ENCODE measurements at regions of chr2 and their contacts with region 1.

Region 1: GRCh38 chr2:190781604-190782198 is 98.9 kb upstream of the GLS start:
- H3K4me3 Mint-ChIP-seq: no peak overlapping the region
- H3K27ac Mint-ChIP-seq: no peak overlapping the region
- H3K4me1 Mint-ChIP-seq: no peaks in the 10 kb centered on the region
- H3K27me3 Mint-ChIP-seq: no peaks in the 10 kb centered on the region

Region 2: GRCh38 chr2:190804182-190804795 is 22.6 kb after region 1 on chr2:
- intact Hi-C with region 1: loop called (anchors 1 kb)
- H3K4me3 Mint-ChIP-seq: no peak overlapping the region
- H3K27ac Mint-ChIP-seq: no peak overlapping the region
- H3K4me1 Mint-ChIP-seq: peaks cover 6% of the 10 kb centered on the region
- H3K27me3 Mint-ChIP-seq: no peaks in the 10 kb centered on the region

Region 3: GRCh38 chr2:190853531-190854383 is 72.1 kb after region 1 on chr2:
- intact Hi-C with region 1: no loop called
- H3K4me3 Mint-ChIP-seq: no peak overlapping the region
- H3K27ac Mint-ChIP-seq: peak overlapping the region; percentile 43
- H3K4me1 Mint-ChIP-seq: peaks cover 23% of the 10 kb centered on the region
- H3K27me3 Mint-ChIP-seq: no peaks in the 10 kb centered on the region

Region 4: DNA sequence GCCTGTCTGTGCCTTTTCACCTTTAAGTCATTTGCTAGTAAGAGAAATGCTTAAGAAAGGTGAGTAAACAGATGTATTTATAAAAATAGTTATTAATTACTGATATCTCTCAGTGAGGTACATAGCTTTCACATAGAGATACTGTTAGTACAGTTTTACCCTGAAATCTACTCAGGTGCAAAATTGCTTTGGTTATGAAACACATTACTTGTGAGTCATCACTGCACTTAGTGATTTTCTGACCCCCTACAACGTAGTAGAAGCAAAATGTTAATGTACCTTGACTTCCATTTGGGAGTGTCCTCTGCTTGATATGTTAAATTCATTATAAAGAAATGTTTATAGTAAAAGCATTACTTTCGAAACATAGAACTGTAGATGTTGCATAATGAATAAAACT is 105.4 kb after region 1 on chr2:
- intact Hi-C with region 1: loop called (anchors 5 kb)
- H3K4me3 Mint-ChIP-seq: no peak overlapping the region
- H3K27ac Mint-ChIP-seq: no peak overlapping the region
- H3K4me1 Mint-ChIP-seq: peaks cover 62% of the 10 kb centered on the region
- H3K27me3 Mint-ChIP-seq: no peaks in the 10 kb centered on the region

Region 5: GRCh38 chr2:191030521-191031154 is 248.9 kb after region 1 on chr2:
- intact Hi-C with region 1: loop called (anchors 5 kb)
- H3K4me3 Mint-ChIP-seq: no peak overlapping the region
- H3K27ac Mint-ChIP-seq: no peak overlapping the region
- H3K4me1 Mint-ChIP-seq: peaks cover 53% of the 10 kb centered on the region
- H3K27me3 Mint-ChIP-seq: no peaks in the 10 kb centered on the region

Region 6: DNA sequence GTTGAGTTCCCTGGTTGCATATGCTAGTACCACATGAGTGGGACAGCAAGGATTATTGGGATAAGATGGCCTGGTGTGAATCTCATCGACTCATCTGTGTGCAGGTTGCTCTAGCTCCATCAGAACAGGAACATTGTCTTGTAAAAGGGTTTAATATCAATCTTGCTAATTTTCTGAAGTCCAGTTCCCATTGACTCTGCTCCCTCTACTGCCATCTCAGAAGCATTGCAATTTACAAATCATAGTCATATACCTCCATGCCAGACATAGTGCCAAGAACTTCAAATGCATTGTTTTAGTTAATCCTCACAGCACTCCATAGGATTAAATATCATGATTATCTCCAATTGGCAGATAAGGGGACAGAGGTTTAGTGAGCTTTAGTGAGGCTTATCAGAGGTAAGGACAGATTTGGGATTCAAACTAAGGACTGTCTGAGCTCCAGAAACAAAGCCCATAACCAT is 373.9 kb after region 1 on chr2:
- intact Hi-C with region 1: loop called (anchors 2 kb)
- H3K4me3 Mint-ChIP-seq: no peak overlapping the region
- H3K27ac Mint-ChIP-seq: no peak overlapping the region
- H3K4me1 Mint-ChIP-seq: peaks cover 23% of the 10 kb centered on the region
- H3K27me3 Mint-ChIP-seq: no peaks in the 10 kb centered on the region

Region 7: DNA sequence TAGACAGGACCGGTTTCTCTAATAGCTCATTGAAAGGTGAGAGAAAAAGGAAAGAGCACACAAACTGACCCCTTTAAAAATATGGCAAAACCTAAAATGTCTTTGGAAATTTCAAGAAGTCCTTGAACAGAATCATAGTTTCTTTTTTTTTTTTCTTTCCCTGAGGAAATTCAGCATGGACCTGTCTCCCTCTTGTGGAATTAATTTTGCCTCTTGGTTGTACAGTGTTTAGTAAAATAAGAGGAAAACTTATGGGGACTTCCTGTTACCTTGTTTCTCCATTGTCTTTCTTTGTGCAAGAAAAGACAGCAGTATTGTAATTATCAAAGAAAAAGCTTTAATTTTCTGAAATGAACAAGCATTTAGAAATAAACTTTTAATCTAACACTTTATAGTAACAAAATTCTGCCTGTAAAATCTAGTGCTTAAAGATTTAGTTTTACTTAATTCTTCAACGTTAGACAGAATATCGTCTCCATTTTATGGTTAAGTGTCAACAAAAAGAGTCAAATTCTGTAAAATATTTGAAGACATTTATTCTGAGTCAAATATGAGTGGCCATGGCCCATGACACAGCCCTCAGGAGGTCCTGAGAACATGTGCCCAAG is 720.0 kb after region 1 on chr2:
- intact Hi-C with region 1: loop called (anchors 10 kb)
- H3K4me3 Mint-ChIP-seq: no peak overlapping the region
- H3K27ac Mint-ChIP-seq: no peak overlapping the region
- H3K4me1 Mint-ChIP-seq: no peaks in the 10 kb centered on the region
- H3K27me3 Mint-ChIP-seq: no peaks in the 10 kb centered on the region